CD4-positive, alpha-beta memory T cell (primary cell): ENCODE measurements at regions of chr17 and their contacts with region 1.

Region 1: GRCh38 chr17:4412933-4413831 is 20.6 kb upstream of the SPNS3 start:
- DNase-seq: peak; percentile 79 to 88 (median 83)
- H3K4me3 ChIP-seq: peak overlapping the region in 1 of 2 donors; percentile 46
- H3K4me3 Mint-ChIP-seq: peak overlapping the region; percentile 52 to 79 (median 71)
- H3K27ac ChIP-seq: no peak overlapping the region
- H3K27ac Mint-ChIP-seq: peak overlapping the region in 4 of 7 donors; percentile 22 to 59 (median 57)
- H3K4me1 ChIP-seq: peaks cover 7% of the 10 kb centered on the region
- H3K4me1 Mint-ChIP-seq: peaks cover 4 to 6% (median 5%) of the 10 kb centered on the region in 4 donors
- H3K27me3 ChIP-seq: no peaks in the 10 kb centered on the region
- H3K27me3 Mint-ChIP-seq: no peaks in the 10 kb centered on the region

Region 2: DNA sequence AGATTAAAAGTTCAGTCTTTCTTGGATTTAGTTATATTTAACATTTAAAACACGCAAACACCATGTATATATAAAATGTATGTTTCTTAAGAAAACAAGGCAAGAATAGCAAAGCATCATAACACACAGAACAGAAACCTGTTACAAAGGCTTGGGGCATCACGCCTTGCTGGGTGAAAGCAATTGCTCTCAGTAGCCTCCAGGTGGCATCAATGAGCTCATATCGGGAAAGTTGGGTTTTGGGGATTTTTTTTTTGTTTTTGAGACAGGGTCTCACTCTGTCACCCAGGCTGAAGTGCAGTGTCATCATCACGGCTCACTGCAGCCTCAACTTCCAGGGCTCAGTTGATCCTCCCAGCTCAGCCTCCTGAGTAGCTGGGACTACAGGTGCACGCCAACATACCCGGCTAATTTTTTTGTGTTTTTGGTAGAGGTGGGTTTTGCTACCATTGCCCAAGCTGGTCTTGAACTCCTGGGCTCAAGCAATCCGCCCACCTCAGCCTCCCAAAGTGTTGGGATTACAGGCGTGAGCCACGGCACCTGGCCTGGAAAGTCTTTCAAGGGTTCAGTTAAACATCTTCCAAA is 213.3 kb before region 1 on chr17:
- CTCF ChIA-PET with region 1: interaction called, 60 read pairs
- POLR2A ChIA-PET with region 1: no interaction called
- intact Hi-C with region 1: loop called (anchors 1 kb)
- DNase-seq: peak; percentile 39 to 43 (median 43)
- H3K4me3 ChIP-seq: no peak overlapping the region
- H3K4me3 Mint-ChIP-seq: no peak overlapping the region
- H3K27ac ChIP-seq: no peak overlapping the region
- H3K27ac Mint-ChIP-seq: no peak overlapping the region
- H3K4me1 ChIP-seq: no peaks in the 10 kb centered on the region
- H3K4me1 Mint-ChIP-seq: peaks cover 0 to 5% (median 2%) of the 10 kb centered on the region in 4 donors
- H3K27me3 ChIP-seq: no peaks in the 10 kb centered on the region
- H3K27me3 Mint-ChIP-seq: no peaks in the 10 kb centered on the region

Region 3: DNA sequence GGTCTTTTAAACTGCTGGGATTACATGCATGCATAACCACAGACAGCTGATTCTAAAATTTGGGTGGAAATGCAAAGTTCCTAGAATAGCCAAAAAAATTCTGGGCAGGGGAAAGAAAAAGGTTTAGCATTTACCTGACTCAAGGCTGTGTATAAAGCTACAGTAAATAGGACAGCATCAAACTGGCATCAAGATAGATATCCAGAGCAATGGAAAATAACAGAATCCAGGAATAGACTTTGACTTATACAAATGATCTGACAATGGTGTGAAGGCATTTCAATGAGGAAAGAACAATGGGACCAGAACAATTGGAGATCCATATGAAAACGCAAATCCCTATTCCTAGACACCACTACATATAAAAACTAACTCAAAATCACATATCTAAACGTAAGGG is 162.3 kb before region 1 on chr17:
- CTCF ChIA-PET with region 1: no interaction called
- POLR2A ChIA-PET with region 1: no interaction called
- intact Hi-C with region 1: no loop called
- DNase-seq: no peak
- H3K4me3 ChIP-seq: no peak overlapping the region
- H3K4me3 Mint-ChIP-seq: peak overlapping the region in 1 of 8 donors; percentile 21
- H3K27ac ChIP-seq: no peak overlapping the region
- H3K27ac Mint-ChIP-seq: peak overlapping the region in 1 of 7 donors; percentile 37
- H3K4me1 ChIP-seq: peaks cover 50% of the 10 kb centered on the region
- H3K4me1 Mint-ChIP-seq: peaks cover 33 to 79% (median 57%) of the 10 kb centered on the region in 4 donors
- H3K27me3 ChIP-seq: no peaks in the 10 kb centered on the region
- H3K27me3 Mint-ChIP-seq: no peaks in the 10 kb centered on the region

Region 4: GRCh38 chr17:4304417-4305027 is 108.7 kb before region 1 on chr17:
- CTCF ChIA-PET with region 1: interaction called, 3 read pairs
- POLR2A ChIA-PET with region 1: no interaction called
- intact Hi-C with region 1: loop called (anchors 1 kb)
- DNase-seq: peak; percentile 45 to 65 (median 54)
- H3K4me3 ChIP-seq: no peak overlapping the region
- H3K4me3 Mint-ChIP-seq: no peak overlapping the region
- H3K27ac ChIP-seq: no peak overlapping the region
- H3K27ac Mint-ChIP-seq: no peak overlapping the region
- H3K4me1 ChIP-seq: peaks cover 12% of the 10 kb centered on the region
- H3K4me1 Mint-ChIP-seq: peaks cover 15 to 29% (median 22%) of the 10 kb centered on the region in 4 donors
- H3K27me3 ChIP-seq: no peaks in the 10 kb centered on the region
- H3K27me3 Mint-ChIP-seq: no peaks in the 10 kb centered on the region

Region 5: DNA sequence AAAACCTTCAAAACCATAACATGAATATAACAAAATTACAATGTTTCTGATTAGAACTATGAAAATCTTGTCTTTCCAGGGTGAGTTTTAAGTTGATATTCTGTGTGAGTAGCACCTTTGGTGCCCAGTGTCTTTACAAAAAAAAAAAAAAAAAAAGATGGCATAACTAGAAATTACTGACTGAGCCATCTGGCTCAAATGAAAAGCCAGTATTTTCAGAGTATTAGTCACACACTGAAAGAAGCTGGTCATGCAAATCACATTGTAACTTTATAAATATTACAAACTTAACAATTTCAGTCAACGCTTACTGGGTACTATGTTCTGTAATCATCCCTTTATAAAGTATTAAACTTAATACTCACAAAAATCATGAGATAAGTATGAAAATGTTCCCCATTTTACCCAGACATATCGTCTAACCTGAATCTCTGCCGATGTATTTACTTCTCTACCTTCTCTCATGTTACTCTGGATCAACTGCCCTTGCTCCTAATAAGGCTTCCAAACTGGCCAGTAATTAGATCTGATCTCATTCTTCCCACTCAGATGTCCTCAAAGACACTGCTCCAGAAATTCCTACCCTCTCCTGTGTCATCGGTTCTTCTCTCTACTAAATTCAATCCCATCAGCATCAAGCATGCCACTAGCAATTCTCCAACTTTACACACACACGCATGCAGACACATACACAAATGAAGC is 72.1 kb before region 1 on chr17:
- CTCF ChIA-PET with region 1: no interaction called
- POLR2A ChIA-PET with region 1: no interaction called
- intact Hi-C with region 1: no loop called
- DNase-seq: no peak
- H3K4me3 ChIP-seq: no peak overlapping the region
- H3K4me3 Mint-ChIP-seq: no peak overlapping the region
- H3K27ac ChIP-seq: no peak overlapping the region
- H3K27ac Mint-ChIP-seq: no peak overlapping the region
- H3K4me1 ChIP-seq: peaks cover 47% of the 10 kb centered on the region
- H3K4me1 Mint-ChIP-seq: peaks cover 24 to 54% (median 43%) of the 10 kb centered on the region in 4 donors
- H3K27me3 ChIP-seq: no peaks in the 10 kb centered on the region
- H3K27me3 Mint-ChIP-seq: no peaks in the 10 kb centered on the region